ENCODE measurements at regions of chr5 and their contacts with region 1.

Region 1: DNA sequence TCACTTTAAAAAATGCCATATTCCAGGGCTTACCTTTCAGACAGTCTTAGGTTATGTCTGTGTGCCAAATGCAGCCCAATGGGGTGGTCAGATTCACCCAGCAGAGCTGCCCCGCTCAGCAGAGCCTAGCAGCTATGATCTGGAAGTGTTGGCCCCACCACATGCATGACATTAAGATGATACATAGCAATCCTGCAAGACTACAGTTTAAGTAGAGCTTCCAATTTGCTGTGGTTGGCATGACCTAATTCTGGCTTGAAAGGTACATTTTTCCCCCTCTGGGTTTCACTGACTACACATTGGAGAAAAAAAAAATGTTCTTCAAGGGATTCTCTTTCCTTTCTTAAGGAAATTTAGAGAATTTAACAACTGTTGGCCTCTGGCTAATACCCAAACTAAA is 22.5 kb downstream of the MEF2C start:
- DNase-seq: no peak
- H3K4me3 ChIP-seq: no peak overlapping the region
- H3K27ac ChIP-seq: no peak overlapping the region
- H3K4me1 ChIP-seq: no peaks in the 10 kb centered on the region
- H3K27me3 ChIP-seq: no peaks in the 10 kb centered on the region
- CTCF ChIP-seq: no peak

Region 2: DNA sequence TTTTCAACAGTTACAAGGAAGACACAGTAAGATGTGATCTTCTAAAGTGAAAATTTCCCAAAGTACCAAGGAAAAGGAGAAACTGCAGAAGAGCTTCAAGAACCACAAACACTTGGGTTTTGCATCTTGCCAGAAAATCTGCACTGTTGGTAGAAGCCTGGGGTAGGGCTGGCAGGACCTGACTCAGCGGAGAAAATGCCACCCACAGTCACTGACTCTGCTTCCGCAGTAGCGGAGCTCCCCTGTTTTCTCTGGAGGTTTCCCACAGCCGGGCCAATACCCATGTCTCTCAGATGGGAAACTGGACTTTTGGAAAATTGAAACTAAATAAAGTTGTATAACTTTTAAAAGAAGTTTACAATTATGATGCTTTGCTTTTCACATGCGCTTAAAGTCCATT is 81.8 kb before region 1 on chr5:
- CTCF ChIA-PET with region 1: no interaction called
- POLR2A ChIA-PET with region 1: no interaction called
- intact Hi-C with region 1: no loop called
- DNase-seq: no peak
- H3K4me3 ChIP-seq: no peak overlapping the region
- H3K27ac ChIP-seq: no peak overlapping the region
- H3K4me1 ChIP-seq: no peaks in the 10 kb centered on the region
- H3K27me3 ChIP-seq: no peaks in the 10 kb centered on the region
- CTCF ChIP-seq: no peak

Region 3: GRCh38 chr5:90287036-90287435 is 1426.5 kb after region 1 on chr5:
- CTCF ChIA-PET with region 1: no interaction called
- POLR2A ChIA-PET with region 1: interaction called, 11 read pairs
- intact Hi-C with region 1: no loop called
- DNase-seq: no peak
- H3K4me3 ChIP-seq: no peak overlapping the region
- H3K27ac ChIP-seq: no peak overlapping the region
- H3K4me1 ChIP-seq: no peaks in the 10 kb centered on the region
- H3K27me3 ChIP-seq: peaks cover 50% of the 10 kb centered on the region
- CTCF ChIP-seq: no peak